Testis (tissue), 5 donors: ENCODE measurements at regions of chr16 and their contacts with region 1.

Region 1: DNA sequence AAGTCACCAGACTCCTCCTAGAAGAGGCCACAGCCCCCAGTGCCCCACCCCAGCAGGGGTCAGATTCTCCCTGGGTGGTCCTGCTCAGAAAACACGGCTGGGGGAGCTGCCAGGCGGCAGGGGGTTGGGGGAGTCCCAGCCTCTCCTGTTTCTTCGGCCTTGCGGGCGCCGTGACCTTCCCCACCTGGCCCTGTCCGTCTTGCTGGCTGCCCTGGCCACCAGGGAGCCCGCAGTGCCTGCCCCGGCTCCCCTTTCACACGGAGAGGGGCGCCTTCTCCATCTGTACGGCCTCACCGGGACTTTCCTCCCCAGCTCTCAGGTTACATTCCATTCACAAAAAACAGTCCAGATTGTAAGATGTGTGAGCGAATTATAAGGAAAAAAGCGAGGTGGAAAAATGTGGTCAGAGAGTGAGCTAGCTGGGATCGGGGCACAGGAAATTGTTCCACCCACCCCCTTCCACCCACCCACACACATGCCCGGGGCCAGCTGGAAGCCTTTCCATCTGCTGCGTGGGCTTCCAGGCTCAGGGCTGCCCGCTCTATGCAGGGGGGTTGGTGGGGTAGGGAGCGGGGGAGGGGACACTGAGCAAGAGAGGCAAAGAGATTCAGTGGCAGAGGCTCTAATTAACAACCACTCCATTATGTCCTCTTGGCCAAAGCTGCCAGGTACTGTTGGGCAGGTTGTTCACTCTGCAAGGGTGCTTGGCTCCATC is 14.6 kb upstream of the CIBAR2 start:
- DNase-seq: no peak
- H3K4me3 ChIP-seq: no peak overlapping the region
- H3K27ac ChIP-seq: peak overlapping the region in 1 of 2 donors; percentile 48
- H3K4me1 ChIP-seq: peaks cover 37% of the 10 kb centered on the region
- H3K27me3 ChIP-seq: no peaks in the 10 kb centered on the region
- CTCF ChIP-seq: no peak
- POLR2A ChIP-seq: no peak

Region 2: GRCh38 chr16:85168732-85169256 is 41.9 kb after region 1 on chr16:
- intact Hi-C with region 1: no loop called
- DNase-seq: peak; percentile 81
- H3K4me3 ChIP-seq: peak overlapping the region in 1 of 2 donors; percentile 39
- H3K27ac ChIP-seq: no peak overlapping the region
- H3K4me1 ChIP-seq: peaks cover 46% of the 10 kb centered on the region
- H3K27me3 ChIP-seq: no peaks in the 10 kb centered on the region
- CTCF ChIP-seq: no peak
- POLR2A ChIP-seq: no peak

Region 3: DNA sequence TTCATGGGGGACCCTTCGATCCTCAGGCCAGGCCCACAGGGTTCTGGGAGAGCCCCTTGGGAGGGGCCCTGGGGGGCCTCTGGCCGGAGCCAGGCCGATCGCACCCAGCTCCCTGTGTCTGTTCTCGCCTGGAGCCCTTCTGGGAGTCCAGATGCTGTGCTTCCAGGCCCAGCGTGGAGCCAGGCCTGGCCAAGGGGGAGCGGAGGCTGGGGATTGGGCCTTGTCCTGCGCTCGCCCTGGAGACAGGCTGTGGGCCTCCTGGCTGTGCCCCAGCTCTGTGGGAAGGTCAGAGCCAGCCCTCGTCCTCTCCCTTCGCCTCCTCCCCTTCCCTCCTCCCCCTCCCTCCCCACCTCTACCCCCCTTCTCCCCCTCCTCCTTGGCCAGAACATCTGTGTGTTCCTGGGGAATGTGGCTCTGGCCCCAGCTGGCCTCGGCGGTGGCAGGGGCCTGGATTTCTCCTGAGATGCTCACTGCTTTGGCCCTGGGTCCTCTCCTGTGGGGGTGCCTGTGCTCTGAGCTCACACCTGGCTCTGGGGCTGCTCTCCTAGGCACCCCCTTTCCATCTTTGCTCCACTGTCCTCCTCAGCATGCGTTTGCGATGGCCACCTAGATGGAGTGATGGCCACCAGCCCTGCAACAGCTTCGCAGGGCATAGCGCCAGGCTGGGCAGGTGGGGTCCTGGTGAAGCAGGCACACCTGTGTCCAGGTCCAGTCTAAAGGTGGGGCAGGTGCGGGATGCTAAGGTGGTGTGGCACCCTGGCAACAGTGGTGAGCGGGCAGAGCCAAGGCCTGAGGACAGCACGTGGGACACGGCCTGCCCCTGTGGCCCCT is 76.0 kb after region 1 on chr16:
- intact Hi-C with region 1: loop called (anchors 10 kb)
- DNase-seq: peak; percentile 86
- H3K4me3 ChIP-seq: no peak overlapping the region
- H3K27ac ChIP-seq: peak overlapping the region; percentile 67 to 68
- H3K4me1 ChIP-seq: peaks cover 75% of the 10 kb centered on the region
- H3K27me3 ChIP-seq: no peaks in the 10 kb centered on the region
- CTCF ChIP-seq: no peak
- POLR2A ChIP-seq: no peak